ENCODE measurements at regions of chr6 and their contacts with region 1.

Region 1: GRCh38 chr6:31068669-31069340 is 43.6 kb downstream of the C6orf15 start:
- DNase-seq: peak; percentile 73
- H3K4me3 ChIP-seq: no peak overlapping the region
- H3K27ac ChIP-seq: no peak overlapping the region
- H3K4me1 ChIP-seq: peaks cover 6% of the 10 kb centered on the region
- H3K27me3 ChIP-seq: peaks cover 5 to 8% of the 10 kb centered on the region in 2 experiments
- CTCF ChIP-seq: peak; percentile 82 to 91
- POLR2A ChIP-seq: no peak

Region 2: DNA sequence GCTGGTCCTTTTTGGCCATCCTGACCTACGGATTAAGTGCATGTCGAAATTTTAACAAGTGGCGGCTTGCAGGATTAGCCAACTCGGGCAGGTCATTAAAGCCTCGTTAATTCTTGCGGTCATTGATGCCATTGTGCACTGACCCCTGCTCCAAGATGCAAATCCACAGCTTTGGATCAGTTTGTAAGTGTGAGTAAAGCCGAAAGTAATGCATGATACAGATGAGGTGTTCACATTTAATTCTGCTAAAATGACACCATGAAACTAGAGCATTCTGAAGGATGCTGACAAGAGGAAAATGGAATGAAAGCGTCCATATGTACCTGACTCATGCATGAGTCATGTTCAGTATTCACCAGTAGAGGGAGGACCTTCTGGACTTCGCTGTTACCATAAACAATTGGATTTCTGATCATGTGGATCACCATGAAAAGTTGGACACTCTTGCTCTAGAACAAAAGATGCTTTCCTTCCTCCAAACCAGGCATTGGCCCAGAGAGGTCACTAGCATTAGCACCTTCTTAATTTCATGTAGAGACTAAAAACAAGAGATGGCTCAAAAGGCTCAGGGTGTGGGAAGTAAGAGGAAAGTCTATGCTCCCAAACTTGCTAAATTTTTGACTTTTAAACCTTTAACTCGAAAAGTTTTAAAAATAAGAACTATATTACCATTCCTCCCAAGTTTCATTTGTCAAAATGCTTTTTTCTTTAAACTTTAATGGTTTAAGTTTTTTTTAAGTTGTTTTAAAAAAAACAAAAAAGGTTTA is 10.5 kb before region 1 on chr6:
- CTCF ChIA-PET with region 1: interaction called, 14 read pairs
- POLR2A ChIA-PET with region 1: no interaction called
- dilution Hi-C with region 1: no loop called
- intact Hi-C with region 1: loop called (anchors 1 kb)
- DNase-seq: peak; percentile 80
- H3K4me3 ChIP-seq: no peak overlapping the region
- H3K27ac ChIP-seq: no peak overlapping the region
- H3K4me1 ChIP-seq: no peaks in the 10 kb centered on the region
- H3K27me3 ChIP-seq: peaks cover 7 to 10% of the 10 kb centered on the region in 2 experiments
- CTCF ChIP-seq: peak; percentile 36 to 60
- POLR2A ChIP-seq: no peak

Measured in endothelial cell of umbilical vein (primary cell).